CD8-positive, alpha-beta T cell (primary cell): ENCODE measurements at regions of chr1 and their contacts with region 1.

Region 1: DNA sequence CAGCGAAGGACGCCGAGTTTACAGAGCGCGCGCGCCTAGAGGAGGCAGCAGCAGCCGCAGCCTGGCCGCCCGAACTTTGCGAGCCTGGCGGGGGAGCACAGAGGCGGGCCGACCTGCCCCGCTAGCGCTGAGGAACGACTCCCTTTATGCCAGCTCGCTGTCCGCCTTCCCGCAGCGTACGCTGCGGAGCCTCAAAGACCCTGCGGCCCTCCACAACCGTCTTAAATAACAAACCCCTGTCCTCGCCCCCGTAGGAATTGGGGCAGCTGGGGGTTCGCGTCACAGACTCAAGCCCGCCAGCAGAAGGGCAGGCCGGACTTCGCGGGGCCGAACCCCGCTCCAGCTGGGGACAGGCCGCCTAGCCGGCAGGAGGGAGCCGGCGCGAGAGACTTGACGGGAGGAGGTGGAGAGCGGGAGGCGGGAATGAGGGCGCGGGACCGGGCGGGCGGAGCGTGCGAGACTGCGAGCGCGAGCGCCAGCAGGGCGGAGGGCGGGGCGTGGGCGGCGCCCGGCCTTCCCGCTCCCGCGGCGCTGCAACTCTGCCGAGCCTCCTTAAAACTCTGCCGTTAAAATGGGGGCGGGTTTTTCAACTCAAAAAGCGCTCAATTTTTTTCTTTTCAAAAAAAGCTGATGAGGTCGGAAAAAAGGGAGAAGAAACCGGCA is 1.8 kb upstream of the CDKN2C start:
- DNase-seq: peak; percentile 57 to 93 (median 82)
- ATAC-seq: peak; percentile 79
- H3K4me3 ChIP-seq: peak overlapping the region; percentile 88 to 97
- H3K4me3 Mint-ChIP-seq: peak overlapping the region; percentile 99
- H3K27ac ChIP-seq: peak overlapping the region; percentile 86 to 91
- H3K27ac Mint-ChIP-seq: peak overlapping the region; percentile 88
- H3K4me1 ChIP-seq: peaks cover 6% of the 10 kb centered on the region
- H3K4me1 Mint-ChIP-seq: peaks cover 27% of the 10 kb centered on the region
- H3K27me3 ChIP-seq: no peaks in the 10 kb centered on the region
- H3K27me3 Mint-ChIP-seq: no peaks in the 10 kb centered on the region
- CTCF ChIP-seq: peak; percentile 42

Region 2: DNA sequence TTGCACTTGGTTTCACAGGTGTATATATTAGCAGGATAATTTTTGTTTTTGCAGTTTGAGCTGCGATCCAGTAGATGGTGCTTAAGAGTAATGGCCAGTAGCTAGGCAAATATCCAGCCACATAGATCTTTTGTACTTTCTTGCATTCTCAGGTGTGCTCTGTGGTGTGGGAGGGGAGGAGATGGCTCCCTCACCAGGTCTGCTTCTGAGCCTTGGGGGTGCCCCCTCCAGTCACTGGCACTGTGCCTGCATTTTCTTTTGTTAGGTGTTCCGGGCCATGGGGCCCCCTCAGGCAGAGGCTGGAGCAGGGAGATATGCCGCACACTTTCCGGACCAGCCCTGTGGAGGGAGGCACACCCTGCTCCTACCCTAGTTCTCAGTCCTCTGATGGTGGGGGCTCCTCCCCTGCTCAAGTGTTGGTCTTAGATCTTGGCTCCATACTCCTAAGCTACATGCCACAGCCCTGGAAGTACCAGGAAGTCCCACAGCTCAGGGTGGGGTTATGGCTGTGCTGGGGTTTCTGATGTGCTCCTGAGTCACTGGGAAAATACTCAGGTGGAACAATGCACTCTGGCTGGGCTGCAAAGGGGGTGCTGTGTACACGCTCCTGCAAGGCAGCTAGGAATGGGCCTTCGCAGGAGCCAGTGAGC is 347.5 kb before region 1 on chr1:
- CTCF ChIA-PET with region 1: no interaction called
- POLR2A ChIA-PET with region 1: no interaction called
- intact Hi-C with region 1: no loop called
- DNase-seq: no peak
- ATAC-seq: no peak
- H3K4me3 ChIP-seq: no peak overlapping the region
- H3K4me3 Mint-ChIP-seq: no peak overlapping the region
- H3K27ac ChIP-seq: no peak overlapping the region
- H3K27ac Mint-ChIP-seq: no peak overlapping the region
- H3K4me1 ChIP-seq: no peaks in the 10 kb centered on the region
- H3K4me1 Mint-ChIP-seq: no peaks in the 10 kb centered on the region
- H3K27me3 ChIP-seq: no peaks in the 10 kb centered on the region
- H3K27me3 Mint-ChIP-seq: no peaks in the 10 kb centered on the region
- CTCF ChIP-seq: no peak

Region 3: GRCh38 chr1:50929376-50929958 is 38.8 kb before region 1 on chr1:
- CTCF ChIA-PET with region 1: interaction called, 13 read pairs
- POLR2A ChIA-PET with region 1: interaction called, 9 read pairs
- intact Hi-C with region 1: loop called in 1 of 2 experiments (anchors 1 kb)
- DNase-seq: peak in 2 of 9 experiments; percentile 30 to 50
- ATAC-seq: no peak
- H3K4me3 ChIP-seq: no peak overlapping the region
- H3K4me3 Mint-ChIP-seq: no peak overlapping the region
- H3K27ac ChIP-seq: no peak overlapping the region
- H3K27ac Mint-ChIP-seq: no peak overlapping the region
- H3K4me1 ChIP-seq: no peaks in the 10 kb centered on the region
- H3K4me1 Mint-ChIP-seq: peaks cover 29% of the 10 kb centered on the region
- H3K27me3 ChIP-seq: no peaks in the 10 kb centered on the region
- H3K27me3 Mint-ChIP-seq: no peaks in the 10 kb centered on the region
- CTCF ChIP-seq: peak; percentile 71

Region 4: GRCh38 chr1:50955116-50955515 is 13.2 kb before region 1 on chr1:
- CTCF ChIA-PET with region 1: interaction called, 21 read pairs
- POLR2A ChIA-PET with region 1: interaction called, 51 read pairs
- intact Hi-C with region 1: loop called (anchors 1 kb)
- DNase-seq: no peak
- ATAC-seq: no peak
- H3K4me3 ChIP-seq: no peak overlapping the region
- H3K4me3 Mint-ChIP-seq: no peak overlapping the region
- H3K27ac ChIP-seq: no peak overlapping the region
- H3K27ac Mint-ChIP-seq: no peak overlapping the region
- H3K4me1 ChIP-seq: peaks cover 15% of the 10 kb centered on the region
- H3K4me1 Mint-ChIP-seq: peaks cover 38% of the 10 kb centered on the region
- H3K27me3 ChIP-seq: no peaks in the 10 kb centered on the region
- H3K27me3 Mint-ChIP-seq: no peaks in the 10 kb centered on the region
- CTCF ChIP-seq: no peak

Region 5: DNA sequence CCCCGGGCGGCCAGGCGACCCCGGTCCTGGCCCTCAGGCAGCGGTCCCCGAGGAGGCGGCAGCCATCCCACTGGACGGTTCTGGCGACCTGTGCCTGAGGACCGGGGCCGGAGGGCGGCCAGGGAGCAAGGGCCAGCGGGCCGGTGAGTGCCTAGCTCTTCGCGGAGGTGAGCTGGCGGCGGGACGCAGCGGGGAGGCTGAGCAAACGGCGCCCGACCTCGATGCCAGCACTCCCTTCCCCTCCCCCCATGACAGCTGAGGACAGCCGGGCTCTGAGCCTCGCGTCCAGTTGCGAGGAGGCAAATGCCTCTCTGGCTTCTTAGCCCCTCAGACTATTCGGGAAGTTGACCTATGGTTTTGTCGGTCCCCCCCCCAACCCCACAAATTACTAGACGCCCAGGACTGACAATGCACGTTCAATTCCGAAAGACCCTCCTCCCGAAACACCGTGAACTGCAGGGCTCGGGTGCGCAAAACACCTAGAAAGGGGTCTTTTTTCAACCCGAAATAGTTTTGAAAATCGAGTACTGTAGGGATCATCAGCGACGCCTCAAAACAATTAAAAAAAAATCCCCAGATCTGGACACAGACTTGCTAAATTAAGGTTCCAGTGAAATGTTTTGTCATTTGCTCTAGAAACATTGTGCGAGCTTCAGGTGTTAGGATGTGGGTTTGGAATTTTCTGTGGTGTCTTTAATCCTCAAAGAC is 10.0 kb after region 1 on chr1:
- CTCF ChIA-PET with region 1: interaction called, 9 read pairs
- POLR2A ChIA-PET with region 1: interaction called, 27 read pairs
- intact Hi-C with region 1: loop called in 1 of 2 experiments (anchors 1 kb)
- DNase-seq: peak in 6 of 9 experiments; percentile 16 to 61 (median 38)
- ATAC-seq: peak; percentile 37
- H3K4me3 ChIP-seq: peak overlapping the region; percentile 63 to 67
- H3K4me3 Mint-ChIP-seq: peak overlapping the region; percentile 84
- H3K27ac ChIP-seq: peak overlapping the region in 1 of 2 experiments; percentile 1
- H3K27ac Mint-ChIP-seq: peak overlapping the region; percentile 34
- H3K4me1 ChIP-seq: peaks cover 24% of the 10 kb centered on the region
- H3K4me1 Mint-ChIP-seq: peaks cover 24% of the 10 kb centered on the region
- H3K27me3 ChIP-seq: no peaks in the 10 kb centered on the region
- H3K27me3 Mint-ChIP-seq: peaks cover 15% of the 10 kb centered on the region
- CTCF ChIP-seq: no peak

Region 6: DNA sequence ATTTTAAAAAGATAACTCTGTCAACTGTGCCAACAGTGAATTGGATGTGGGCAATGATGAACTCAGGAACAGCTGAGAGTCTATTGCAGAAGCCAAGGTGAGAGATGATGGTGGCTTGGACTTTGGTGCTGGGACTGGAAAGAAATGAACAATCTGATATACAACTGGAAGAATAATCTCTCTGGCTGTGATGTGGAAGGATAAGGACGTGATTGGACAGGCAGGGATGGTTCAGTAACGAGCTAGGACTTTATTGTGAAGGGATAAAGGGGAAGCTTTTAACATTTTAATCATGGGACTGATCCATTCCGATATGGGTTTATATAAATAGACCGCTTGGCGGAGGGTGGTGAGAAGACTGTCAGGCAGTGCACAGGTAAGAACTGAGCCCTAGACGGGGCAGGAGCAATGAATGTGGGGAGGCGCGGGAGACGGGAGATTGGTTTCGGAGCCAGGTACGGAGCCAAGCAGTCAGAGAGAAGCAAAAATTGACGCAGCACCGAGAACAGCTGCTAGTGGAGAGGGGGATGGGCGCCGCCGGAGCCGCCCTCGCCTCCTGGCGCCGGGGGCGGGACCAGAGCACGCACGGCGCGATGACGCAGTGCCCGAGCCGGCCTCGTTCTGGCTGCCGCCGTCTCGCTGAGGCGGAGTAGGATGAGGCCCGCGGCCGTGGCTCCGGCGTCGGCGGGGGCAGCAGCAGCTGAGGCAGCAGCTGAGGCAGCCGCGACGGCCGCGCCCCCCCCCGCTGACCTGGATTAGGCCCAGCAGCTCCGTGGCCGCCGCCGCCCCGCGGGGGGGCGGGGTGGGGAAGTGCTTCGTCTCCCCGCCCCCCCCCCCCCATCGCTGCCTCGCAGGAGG is 267.6 kb after region 1 on chr1 and contains the start of gene RNF11:
- CTCF ChIA-PET with region 1: no interaction called
- POLR2A ChIA-PET with region 1: interaction called, 5 read pairs
- intact Hi-C with region 1: loop called (anchors 2 to 5 kb)
- DNase-seq: peak; percentile 86 to 97 (median 91)
- ATAC-seq: peak; percentile 92
- H3K4me3 ChIP-seq: peak within 1 kb of the TSS; percentile 79 to 90
- H3K4me3 Mint-ChIP-seq: peak within 1 kb of the TSS; percentile 98
- H3K27ac ChIP-seq: peak within 1 kb of the TSS; percentile 80 to 92
- H3K27ac Mint-ChIP-seq: peak within 1 kb of the TSS; percentile 99
- H3K4me1 ChIP-seq: peaks cover 37% of the 10 kb centered on the region
- H3K4me1 Mint-ChIP-seq: peaks cover 33% of the 10 kb centered on the region
- H3K27me3 ChIP-seq: no peaks in the 10 kb centered on the region
- H3K27me3 Mint-ChIP-seq: no peaks in the 10 kb centered on the region
- CTCF ChIP-seq: no peak
- total RNA-seq, gene RNF11: 95.9 to 103 TPM

Region 7: GRCh38 chr1:51616901-51617708 is 648.8 kb after region 1 on chr1 and contains the start of gene OSBPL9:
- CTCF ChIA-PET with region 1: no interaction called
- POLR2A ChIA-PET with region 1: no interaction called
- intact Hi-C with region 1: loop called in 1 of 2 experiments (anchors 10 kb)
- DNase-seq: peak; percentile 78 to 94 (median 87)
- ATAC-seq: peak; percentile 93
- H3K4me3 ChIP-seq: peak within 1 kb of the TSS; percentile 90 to 98
- H3K4me3 Mint-ChIP-seq: peak within 1 kb of the TSS; percentile 100
- H3K27ac ChIP-seq: peak within 1 kb of the TSS; percentile 84
- H3K27ac Mint-ChIP-seq: peak within 1 kb of the TSS; percentile 99
- H3K4me1 ChIP-seq: peaks cover 23% of the 10 kb centered on the region
- H3K4me1 Mint-ChIP-seq: peaks cover 42% of the 10 kb centered on the region
- H3K27me3 ChIP-seq: no peaks in the 10 kb centered on the region
- H3K27me3 Mint-ChIP-seq: peaks cover under 1% of the 10 kb centered on the region
- CTCF ChIP-seq: no peak
- total RNA-seq, gene OSBPL9: 48.5 to 49.2 TPM

Region 8: GRCh38 chr1:52033190-52034049 is 1065.1 kb after region 1 on chr1 and contains the start of gene KTI12:
- CTCF ChIA-PET with region 1: no interaction called
- POLR2A ChIA-PET with region 1: no interaction called
- intact Hi-C with region 1: loop called in 1 of 2 experiments (anchors 5 kb)
- DNase-seq: peak; percentile 78 to 97 (median 88)
- ATAC-seq: peak; percentile 92
- H3K4me3 ChIP-seq: peak within 1 kb of the TSS; percentile 78 to 80
- H3K4me3 Mint-ChIP-seq: peak within 1 kb of the TSS; percentile 92
- H3K27ac ChIP-seq: peak within 1 kb of the TSS; percentile 88 to 89
- H3K27ac Mint-ChIP-seq: peak within 1 kb of the TSS; percentile 95
- H3K4me1 ChIP-seq: peaks cover 30% of the 10 kb centered on the region
- H3K4me1 Mint-ChIP-seq: peaks cover 38% of the 10 kb centered on the region
- H3K27me3 ChIP-seq: no peaks in the 10 kb centered on the region
- H3K27me3 Mint-ChIP-seq: no peaks in the 10 kb centered on the region
- CTCF ChIP-seq: no peak
- total RNA-seq, gene KTI12: 23.6 to 24.7 TPM